Activated naive CD4-positive, alpha-beta T cell treated with anti-CD3 and anti-CD28 coated beads for 36 hours (primary cell): ENCODE measurements at regions of chr1 and their contacts with region 1.

Region 1: DNA sequence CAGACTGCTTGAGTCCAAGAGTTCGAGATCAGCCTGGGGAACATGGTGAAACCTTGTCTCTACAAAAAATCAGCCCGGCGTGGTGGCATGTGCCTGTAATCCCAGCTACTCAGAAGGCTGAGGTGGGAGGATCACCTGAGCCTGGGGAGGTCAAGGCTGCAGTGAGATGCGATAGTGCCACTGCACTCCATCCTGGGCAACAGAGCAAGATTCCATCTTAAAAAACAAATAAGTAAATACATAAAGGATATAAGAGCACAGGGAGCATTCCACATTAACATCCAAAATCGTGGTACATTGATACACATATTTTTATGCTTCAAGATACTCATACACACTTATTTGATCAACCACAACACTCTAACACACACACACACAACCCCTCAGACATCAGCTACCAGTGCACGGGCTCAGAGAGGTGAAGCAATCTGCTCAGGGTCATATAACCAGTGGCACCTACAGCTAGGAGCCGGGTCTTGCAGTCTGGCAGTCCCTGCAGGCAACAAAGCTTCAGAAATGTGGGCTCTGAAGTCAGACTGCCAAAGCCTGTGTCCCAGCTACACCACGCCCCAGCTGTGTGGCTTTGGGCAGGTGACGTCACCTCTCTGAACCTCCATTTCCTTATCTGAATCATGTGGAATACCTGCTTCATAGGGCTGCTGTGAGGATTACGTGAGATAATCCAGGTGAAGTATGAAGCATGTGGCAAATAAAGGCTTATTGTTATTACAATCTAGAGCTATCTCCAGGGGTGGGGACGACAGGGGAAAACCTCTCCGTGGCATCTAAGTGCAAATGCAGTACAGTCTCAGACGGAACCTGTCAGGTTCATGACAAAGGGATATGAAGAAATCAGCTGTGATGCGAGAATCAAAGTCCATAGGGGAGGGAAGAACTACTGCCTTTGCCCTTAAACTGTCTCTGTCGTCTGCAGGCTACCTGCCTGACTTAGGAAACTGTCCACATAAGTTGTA is 4.8 kb upstream of the CRYBG2 start:
- DNase-seq: peak; percentile 79
- H3K4me3 Mint-ChIP-seq: no peak overlapping the region
- H3K27ac Mint-ChIP-seq: no peak overlapping the region
- H3K4me1 Mint-ChIP-seq: peaks cover 29% of the 10 kb centered on the region
- H3K27me3 Mint-ChIP-seq: peaks cover 6% of the 10 kb centered on the region

Region 2: GRCh38 chr1:26336477-26337205 is 22.1 kb before region 1 on chr1:
- CTCF ChIA-PET with region 1: interaction called, 5 read pairs
- intact Hi-C with region 1: loop called (anchors 2 kb)
- DNase-seq: peak; percentile 78
- H3K4me3 Mint-ChIP-seq: peak overlapping the region; percentile 82
- H3K27ac Mint-ChIP-seq: no peak overlapping the region
- H3K4me1 Mint-ChIP-seq: peaks cover 2% of the 10 kb centered on the region
- H3K27me3 Mint-ChIP-seq: no peaks in the 10 kb centered on the region